Esophagus muscularis mucosa (tissue), 4 donors: ENCODE measurements at regions of chr12 and their contacts with region 1.

Region 1: DNA sequence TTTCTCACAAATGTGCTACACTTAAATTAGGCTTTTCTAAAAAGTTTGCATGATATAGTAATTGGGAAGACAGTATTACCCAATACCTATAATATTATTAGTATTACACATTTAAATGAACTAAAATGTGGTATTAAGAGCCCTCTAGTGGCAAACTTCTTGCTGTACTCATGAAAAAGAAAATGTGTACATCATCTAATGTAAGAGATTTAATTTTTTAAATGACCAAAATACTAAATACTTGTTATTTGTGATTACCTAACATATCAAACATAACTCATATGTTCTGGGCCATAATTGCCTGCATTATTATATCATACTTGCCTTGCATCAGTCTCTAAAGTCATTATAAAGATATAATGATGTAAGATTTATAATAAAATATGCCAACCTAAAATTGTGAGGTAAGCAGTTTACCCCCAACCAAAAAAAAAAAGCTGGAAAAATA is 64.2 kb downstream of the DNAI7 start:
- DNase-seq: no peak
- H3K4me3 ChIP-seq: no peak overlapping the region
- H3K27ac ChIP-seq: no peak overlapping the region
- H3K4me1 ChIP-seq: no peaks in the 10 kb centered on the region
- H3K27me3 ChIP-seq: no peaks in the 10 kb centered on the region
- CTCF ChIP-seq: peak; percentile 54 to 66 (median 58)
- EP300 ChIP-seq: no peak
- POLR2A ChIP-seq: no peak

Region 2: GRCh38 chr12:24991209-24992049 is 139.3 kb before region 1 on chr12:
- intact Hi-C with region 1: loop called (anchors 2 kb)
- DNase-seq: peak; percentile 42
- H3K4me3 ChIP-seq: no peak overlapping the region
- H3K27ac ChIP-seq: no peak overlapping the region
- H3K4me1 ChIP-seq: no peaks in the 10 kb centered on the region
- H3K27me3 ChIP-seq: no peaks in the 10 kb centered on the region
- CTCF ChIP-seq: peak; percentile 59 to 67 (median 65)
- EP300 ChIP-seq: no peak
- POLR2A ChIP-seq: no peak

Region 3: DNA sequence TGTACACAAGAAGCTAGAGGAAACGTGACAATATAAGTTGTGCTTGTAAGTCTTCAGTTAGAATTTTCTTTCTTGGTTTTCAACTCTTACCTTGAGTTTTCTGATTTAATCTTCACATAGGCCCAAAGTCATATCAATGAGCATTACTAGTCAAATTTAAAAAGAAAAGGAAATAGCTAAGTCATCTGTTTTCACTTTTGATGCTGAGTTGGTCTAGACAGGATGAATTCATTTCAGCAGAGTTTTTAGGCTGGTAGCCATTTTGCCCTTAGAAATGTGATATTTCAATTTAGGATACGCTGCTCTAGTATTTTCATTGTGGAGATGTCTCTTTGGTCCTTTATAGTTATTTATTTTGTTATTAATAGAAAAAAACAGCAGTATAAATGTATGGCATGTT is 164.6 kb after region 1 on chr12:
- intact Hi-C with region 1: no loop called
- DNase-seq: no peak
- H3K4me3 ChIP-seq: no peak overlapping the region
- H3K27ac ChIP-seq: no peak overlapping the region
- H3K4me1 ChIP-seq: no peaks in the 10 kb centered on the region
- H3K27me3 ChIP-seq: no peaks in the 10 kb centered on the region
- CTCF ChIP-seq: no peak
- EP300 ChIP-seq: no peak
- POLR2A ChIP-seq: no peak

Region 4: DNA sequence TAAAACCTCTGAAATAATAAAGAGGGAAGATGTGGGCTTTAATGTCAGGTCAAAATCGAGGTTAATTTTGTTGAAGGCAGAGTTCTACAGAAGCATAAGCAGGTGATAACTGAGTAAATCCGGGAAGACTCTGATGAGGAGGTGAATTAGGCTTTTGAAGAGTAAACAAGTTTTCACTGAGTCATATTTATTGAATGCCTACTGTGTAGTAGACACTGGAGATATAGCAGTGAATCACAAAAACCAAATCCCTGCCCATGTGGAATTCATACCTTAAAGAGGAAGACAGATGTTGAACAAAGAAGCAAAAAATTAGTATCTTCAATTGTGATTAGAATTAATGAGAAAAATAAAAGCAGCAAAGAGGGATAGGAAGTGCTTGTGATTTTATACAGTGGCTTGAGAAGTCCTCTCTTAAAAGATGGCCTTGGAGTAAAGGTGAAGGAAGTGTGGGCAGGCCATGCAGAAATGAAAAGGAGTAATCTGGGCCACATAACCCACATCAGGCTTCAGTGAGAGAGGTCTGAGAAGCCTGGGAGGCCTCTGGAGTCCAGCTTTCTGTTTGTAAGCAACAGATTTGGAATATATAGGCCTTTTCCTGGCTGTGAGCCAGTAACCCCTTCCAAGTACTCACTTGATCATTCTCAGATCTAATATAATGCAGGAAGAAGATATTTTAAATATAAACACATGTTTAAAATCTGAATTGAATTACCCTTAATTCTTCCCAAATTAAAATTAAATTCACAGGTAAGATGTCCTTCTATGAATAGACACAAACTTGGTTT is 947.3 kb after region 1 on chr12:
- intact Hi-C with region 1: no loop called
- DNase-seq: no peak
- H3K4me3 ChIP-seq: no peak overlapping the region
- H3K27ac ChIP-seq: no peak overlapping the region
- H3K4me1 ChIP-seq: no peaks in the 10 kb centered on the region
- H3K27me3 ChIP-seq: no peaks in the 10 kb centered on the region
- CTCF ChIP-seq: no peak
- EP300 ChIP-seq: no peak
- POLR2A ChIP-seq: no peak